PC-3 (cell line): ENCODE measurements at regions of chr4 and their contacts with region 1.

Region 1: DNA sequence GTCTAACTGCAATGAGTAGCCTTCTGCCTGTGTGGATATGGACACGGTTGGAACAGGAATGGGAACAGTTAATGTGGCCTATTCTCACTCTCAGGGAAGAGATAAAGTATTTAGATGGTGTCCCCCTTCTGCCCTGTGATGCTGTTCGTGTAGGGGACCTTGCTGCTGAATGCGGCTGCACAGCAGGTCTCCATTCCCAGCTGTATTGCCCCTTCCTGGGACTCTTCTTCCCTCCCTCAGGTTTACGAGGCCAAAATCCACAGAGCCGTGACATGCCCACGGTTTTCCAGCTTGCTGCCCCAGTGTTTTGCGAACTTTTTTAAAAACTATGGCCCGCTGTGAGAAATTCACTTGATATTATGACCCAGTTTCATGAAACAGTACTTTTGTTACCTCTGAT is 50.3 kb downstream of the SNX25 start:
- DNase-seq: no peak
- ATAC-seq: no peak
- H3K4me3 ChIP-seq: no peak overlapping the region
- H3K27ac ChIP-seq: no peak overlapping the region
- H3K4me1 ChIP-seq: peaks cover 31% of the 10 kb centered on the region
- H3K27me3 ChIP-seq: no peaks in the 10 kb centered on the region
- CTCF ChIP-seq: no peak

Region 2: DNA sequence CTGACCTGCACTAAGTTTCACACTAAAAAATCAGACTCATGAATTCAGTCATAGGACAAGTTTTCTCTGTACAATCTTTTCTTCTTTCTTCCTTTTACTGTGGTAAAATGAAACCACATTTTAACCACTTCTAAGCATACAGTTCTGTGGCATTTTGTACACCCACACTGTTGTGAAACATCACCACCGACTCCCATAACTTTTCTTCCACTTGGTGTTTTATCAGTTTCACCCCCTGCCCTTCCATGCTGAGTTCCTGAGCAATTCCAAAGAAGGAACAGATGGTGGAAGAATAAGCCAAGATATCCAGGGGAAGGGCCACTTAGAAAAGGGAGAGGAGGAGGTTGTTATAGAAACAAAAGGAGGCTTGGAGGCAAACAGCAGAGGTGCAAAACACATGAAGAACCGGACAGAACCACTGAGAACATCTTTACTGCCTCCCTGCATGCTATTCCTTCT is 94.1 kb before region 1 on chr4:
- CTCF ChIA-PET with region 1: no interaction called
- POLR2A ChIA-PET with region 1: no interaction called
- intact Hi-C with region 1: no loop called
- DNase-seq: no peak
- ATAC-seq: no peak
- H3K4me3 ChIP-seq: no peak overlapping the region
- H3K27ac ChIP-seq: no peak overlapping the region
- H3K4me1 ChIP-seq: no peaks in the 10 kb centered on the region
- H3K27me3 ChIP-seq: no peaks in the 10 kb centered on the region
- CTCF ChIP-seq: no peak

Region 3: GRCh38 chr4:185425647-185426352 is 166.1 kb after region 1 on chr4 and contains the start of gene UFSP2:
- CTCF ChIA-PET with region 1: no interaction called
- POLR2A ChIA-PET with region 1: interaction called, 17 read pairs
- intact Hi-C with region 1: no loop called
- DNase-seq: peak; percentile 72
- ATAC-seq: peak; percentile 89
- H3K4me3 ChIP-seq: peak within 1 kb of the TSS; percentile 95
- H3K27ac ChIP-seq: peak within 1 kb of the TSS; percentile 83
- H3K4me1 ChIP-seq: peaks cover 5% of the 10 kb centered on the region
- H3K27me3 ChIP-seq: no peaks in the 10 kb centered on the region
- CTCF ChIP-seq: no peak
- total RNA-seq, gene UFSP2: 24.6 and 27.0 TPM in 2 replicates